ENCODE measurements at regions of chr1 and their contacts with region 1.

Region 1: DNA sequence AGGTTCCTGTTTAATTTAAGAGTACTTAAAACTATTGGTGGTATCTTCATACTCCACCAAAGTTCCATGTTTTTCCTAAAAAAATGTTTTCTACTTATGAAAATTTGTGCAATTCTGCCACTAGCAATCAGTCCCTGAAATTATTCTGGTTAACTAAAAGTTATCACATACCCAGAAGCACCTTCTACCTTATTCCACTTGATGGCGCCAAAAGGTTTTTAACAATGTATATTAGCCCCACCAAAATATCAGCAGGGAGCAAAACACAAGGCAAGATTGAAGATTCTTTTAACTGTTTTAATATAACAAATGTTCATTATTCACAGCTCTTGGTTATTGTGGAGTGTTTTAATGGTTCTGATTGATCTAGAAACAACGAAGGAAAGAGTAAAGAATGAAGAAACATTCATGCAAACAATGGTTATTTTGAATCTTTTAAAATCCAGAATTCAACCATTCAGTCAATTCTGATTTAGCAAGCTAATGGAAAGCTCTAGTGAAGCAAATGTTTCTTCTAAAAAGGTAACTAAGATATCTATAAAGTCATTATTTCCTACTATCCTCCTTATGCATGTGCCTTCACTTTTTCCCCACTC is 67.2 kb downstream of the TTLL7 start:
- DNase-seq: no peak
- H3K4me3 ChIP-seq: no peak overlapping the region
- CTCF ChIP-seq: peak; percentile 44

Region 2: GRCh38 chr1:83905315-83905907 is 26.3 kb before region 1 on chr1:
- CTCF ChIA-PET with region 1: interaction called, 10 read pairs
- POLR2A ChIA-PET with region 1: no interaction called
- DNase-seq: no peak
- H3K4me3 ChIP-seq: no peak overlapping the region
- CTCF ChIP-seq: peak; percentile 42

Region 3: GRCh38 chr1:83942914-83943313 is 11.2 kb after region 1 on chr1:
- CTCF ChIA-PET with region 1: interaction called, 42 read pairs
- POLR2A ChIA-PET with region 1: no interaction called
- DNase-seq: no peak
- H3K4me3 ChIP-seq: no peak overlapping the region
- CTCF ChIP-seq: no peak

Measured in AG04449 (cell line).